Lower lobe of right lung (tissue), 2 donors: ENCODE measurements at regions of chr1 and their contacts with region 1.

Region 1: GRCh38 chr1:201970334-201971159 is 11.9 kb upstream of the RNPEP start:
- DNase-seq: no peak
- ATAC-seq: no peak
- H3K4me3 ChIP-seq: no peak overlapping the region
- H3K27ac ChIP-seq: no peak overlapping the region
- H3K4me1 ChIP-seq: no peaks in the 10 kb centered on the region
- H3K27me3 ChIP-seq: no peaks in the 10 kb centered on the region
- CTCF ChIP-seq: no peak

Region 2: DNA sequence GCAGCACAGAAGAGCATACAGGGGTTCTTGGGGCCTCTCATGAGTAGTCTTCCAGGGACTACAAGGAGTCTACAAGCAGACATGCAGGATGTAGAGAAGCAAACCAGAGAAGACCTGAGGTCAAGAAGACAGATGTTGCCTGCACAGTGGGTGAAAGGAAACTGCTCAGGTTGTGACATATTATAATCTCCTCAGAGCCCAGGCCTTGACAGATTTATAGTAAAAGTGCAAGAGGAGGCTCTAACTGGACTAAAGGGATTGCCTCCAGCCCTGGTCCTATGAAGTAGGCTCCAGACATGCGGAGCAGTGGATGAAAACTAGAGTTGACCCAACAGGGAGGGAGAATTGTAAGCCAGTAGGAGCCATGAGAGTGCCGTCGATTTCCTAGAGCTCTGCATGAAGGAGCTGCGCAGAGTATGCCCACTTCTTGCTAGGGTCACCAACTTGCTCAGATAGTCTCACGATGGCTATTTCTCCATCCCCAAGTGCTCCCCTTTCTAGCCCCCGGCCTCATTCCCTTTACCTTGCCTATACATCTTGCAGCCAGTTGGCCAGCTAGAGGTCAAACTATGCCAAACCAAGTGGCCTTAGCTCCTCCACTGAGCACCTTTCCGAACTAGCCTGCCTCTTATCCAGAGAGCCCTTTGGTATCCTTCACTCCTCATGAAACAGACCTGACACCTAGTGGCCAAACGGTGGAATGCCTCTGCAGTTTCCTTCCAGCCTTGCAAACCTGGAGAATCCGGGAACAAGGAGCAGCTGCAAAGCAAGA is 177.8 kb before region 1 on chr1:
- intact Hi-C with region 1: no loop called
- DNase-seq: peak; percentile 60
- ATAC-seq: peak; percentile 92 to 94
- H3K4me3 ChIP-seq: no peak overlapping the region
- H3K27ac ChIP-seq: peak overlapping the region; percentile 19
- H3K4me1 ChIP-seq: peaks cover 34% of the 10 kb centered on the region
- H3K27me3 ChIP-seq: no peaks in the 10 kb centered on the region
- CTCF ChIP-seq: peak; percentile 93

Region 3: DNA sequence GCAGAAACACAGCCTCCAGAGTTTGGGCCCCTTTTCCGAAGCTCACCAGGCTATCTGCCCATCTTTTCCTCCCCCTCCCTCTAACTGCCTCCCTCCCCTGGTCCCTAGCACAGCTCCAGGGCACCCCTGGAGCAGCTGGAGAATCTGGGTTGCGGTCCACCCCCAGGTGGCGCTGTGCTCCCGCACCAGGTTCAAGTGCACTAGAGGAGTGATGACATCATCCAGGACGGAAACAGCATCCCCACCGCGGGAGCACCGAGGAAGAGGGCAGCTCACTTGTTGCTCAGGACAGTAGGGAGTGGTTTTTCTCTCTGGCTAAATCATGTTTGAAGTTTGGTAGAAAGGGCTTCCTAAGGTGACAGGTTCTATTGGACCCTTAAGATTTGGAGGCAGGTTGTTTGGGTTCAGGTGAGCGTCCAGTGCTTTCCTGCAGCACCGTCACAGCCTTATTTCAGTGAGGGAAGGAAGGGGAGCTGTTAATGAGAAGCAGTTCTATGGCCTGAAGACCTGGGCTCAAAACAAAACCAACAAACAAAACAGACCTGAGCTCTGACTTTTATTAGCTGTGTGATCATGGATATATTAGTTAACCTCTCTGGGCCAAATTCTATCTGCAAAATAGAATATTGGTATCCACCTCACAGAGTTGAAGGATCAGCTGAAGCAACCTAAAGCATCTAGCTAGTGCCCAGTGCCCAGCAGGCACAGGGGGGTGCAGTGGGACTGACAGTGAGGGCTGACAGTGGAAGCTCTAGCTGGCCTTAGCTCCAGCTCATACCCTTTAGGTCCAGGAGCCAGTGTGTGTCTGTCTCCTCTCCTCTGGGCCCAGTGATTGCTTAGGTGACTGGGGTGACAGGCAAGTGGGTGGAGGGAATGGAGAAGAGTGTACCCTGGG is 74.4 kb before region 1 on chr1:
- intact Hi-C with region 1: loop called (anchors 10 kb)
- DNase-seq: peak; percentile 88
- ATAC-seq: peak; percentile 90 to 92
- H3K4me3 ChIP-seq: no peak overlapping the region
- H3K27ac ChIP-seq: no peak overlapping the region
- H3K4me1 ChIP-seq: peaks cover 5% of the 10 kb centered on the region
- H3K27me3 ChIP-seq: no peaks in the 10 kb centered on the region
- CTCF ChIP-seq: peak; percentile 93

Region 4: DNA sequence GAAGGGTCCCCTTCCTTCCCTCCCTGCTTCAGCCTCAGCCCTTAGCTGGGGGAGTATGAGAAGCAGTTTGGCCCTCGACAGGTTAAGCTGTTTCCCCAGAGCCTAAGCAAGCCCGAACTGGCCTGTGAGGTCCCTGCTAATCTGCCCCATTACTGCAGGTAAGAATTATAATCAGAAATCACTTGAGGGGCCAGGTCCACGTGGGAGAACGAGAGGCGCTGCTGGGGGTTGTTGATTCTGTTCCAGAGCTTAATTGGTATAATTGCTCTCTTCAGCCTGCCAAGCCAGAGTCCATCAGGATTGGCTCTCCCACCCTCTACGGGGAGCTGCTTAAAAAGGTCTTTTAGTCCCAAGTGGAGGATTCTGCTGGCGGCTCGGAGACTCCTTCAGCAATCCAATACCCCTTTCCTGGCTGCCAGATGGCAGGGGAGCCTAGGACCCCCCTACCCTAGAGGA is 300.4 kb after region 1 on chr1:
- intact Hi-C with region 1: no loop called
- DNase-seq: no peak
- ATAC-seq: no peak
- H3K4me3 ChIP-seq: no peak overlapping the region
- H3K27ac ChIP-seq: no peak overlapping the region
- H3K4me1 ChIP-seq: no peaks in the 10 kb centered on the region
- H3K27me3 ChIP-seq: peaks cover 12% of the 10 kb centered on the region
- CTCF ChIP-seq: no peak